B cell (primary cell): ENCODE measurements at regions of chr6 and their contacts with region 1.

Region 1: DNA sequence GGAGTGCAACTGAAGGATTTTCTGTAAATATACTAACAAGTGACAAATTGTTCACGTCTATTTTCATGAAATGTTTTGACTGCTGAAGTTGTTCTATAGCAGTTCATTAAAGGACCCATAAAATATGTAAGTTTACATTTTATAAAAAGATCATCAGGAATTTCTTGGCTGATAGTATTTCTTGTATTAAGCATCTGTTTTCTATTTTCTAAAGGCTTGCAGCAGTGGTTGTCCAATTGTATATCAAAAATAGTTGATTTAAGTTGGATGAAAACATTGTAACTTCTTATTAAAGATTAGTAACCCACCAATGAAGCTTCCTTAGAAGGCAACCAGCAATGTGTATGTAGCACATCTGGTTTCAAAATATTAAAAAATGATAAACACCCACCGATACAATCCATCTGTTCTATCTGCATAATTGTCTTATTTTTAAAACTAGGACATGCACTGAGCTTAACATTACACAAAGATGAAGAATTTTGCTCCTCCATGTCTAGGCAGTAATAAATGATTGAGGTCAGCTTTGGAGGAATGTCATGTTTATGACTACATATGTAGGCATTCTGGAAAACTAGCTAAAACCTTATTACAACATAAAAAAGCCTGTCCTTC is 301.3 kb upstream of the TCF21 start:
- DNase-seq: no peak
- ATAC-seq: no peak
- H3K4me3 ChIP-seq: no peak overlapping the region
- H3K4me3 Mint-ChIP-seq: no peak overlapping the region
- H3K27ac ChIP-seq: no peak overlapping the region
- H3K27ac Mint-ChIP-seq: no peak overlapping the region
- H3K4me1 ChIP-seq: no peaks in the 10 kb centered on the region
- H3K4me1 Mint-ChIP-seq: no peaks in the 10 kb centered on the region
- H3K27me3 ChIP-seq: no peaks in the 10 kb centered on the region
- H3K27me3 Mint-ChIP-seq: peaks cover 5% of the 10 kb centered on the region
- CTCF ChIP-seq: no peak

Region 2: DNA sequence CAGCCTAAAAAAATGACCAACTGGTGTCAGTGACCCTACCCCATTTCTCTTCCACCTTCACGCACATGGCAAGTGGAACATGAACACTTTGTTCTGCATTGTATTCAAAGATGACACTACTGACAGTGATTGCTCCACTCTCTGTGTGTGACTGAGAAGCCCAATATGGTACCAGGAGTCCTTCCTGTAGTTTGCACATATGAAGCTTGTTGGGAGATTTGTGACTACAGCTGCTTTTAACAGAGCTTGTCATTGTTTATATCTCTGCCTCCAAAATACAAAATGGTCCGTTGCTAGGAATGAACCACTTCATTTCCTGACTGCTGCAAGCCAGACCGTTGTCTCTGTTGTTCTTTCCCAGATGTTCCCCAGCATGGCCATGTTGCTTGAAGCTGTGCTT is 161.0 kb after region 1 on chr6:
- CTCF ChIA-PET with region 1: no interaction called
- POLR2A ChIA-PET with region 1: no interaction called
- intact Hi-C with region 1: loop called (anchors 2 kb)
- DNase-seq: no peak
- ATAC-seq: no peak
- H3K4me3 ChIP-seq: no peak overlapping the region
- H3K4me3 Mint-ChIP-seq: no peak overlapping the region
- H3K27ac ChIP-seq: no peak overlapping the region
- H3K27ac Mint-ChIP-seq: no peak overlapping the region
- H3K4me1 ChIP-seq: no peaks in the 10 kb centered on the region
- H3K4me1 Mint-ChIP-seq: no peaks in the 10 kb centered on the region
- H3K27me3 ChIP-seq: no peaks in the 10 kb centered on the region
- H3K27me3 Mint-ChIP-seq: no peaks in the 10 kb centered on the region
- CTCF ChIP-seq: no peak